ENCODE measurements at regions of chr5 and their contacts with region 1.

Region 1: GRCh38 chr5:32232441-32233219 is 58.5 kb upstream of the GOLPH3 start:
- DNase-seq: peak; percentile 41
- ATAC-seq: peak; percentile 94
- H3K4me3 ChIP-seq: no peak overlapping the region
- H3K27ac ChIP-seq: no peak overlapping the region
- H3K4me1 ChIP-seq: peaks cover 0 to 10% of the 10 kb centered on the region in 2 experiments; a peak in 2 of 4 replicates
- H3K27me3 ChIP-seq: no peaks in the 10 kb centered on the region
- CTCF ChIP-seq: peak; percentile 65 to 90 (median 79); a peak in 5 of 6 replicates
- POLR2A ChIP-seq: no peak
- RAD21 ChIP-seq: peak; percentile 82

Region 2: DNA sequence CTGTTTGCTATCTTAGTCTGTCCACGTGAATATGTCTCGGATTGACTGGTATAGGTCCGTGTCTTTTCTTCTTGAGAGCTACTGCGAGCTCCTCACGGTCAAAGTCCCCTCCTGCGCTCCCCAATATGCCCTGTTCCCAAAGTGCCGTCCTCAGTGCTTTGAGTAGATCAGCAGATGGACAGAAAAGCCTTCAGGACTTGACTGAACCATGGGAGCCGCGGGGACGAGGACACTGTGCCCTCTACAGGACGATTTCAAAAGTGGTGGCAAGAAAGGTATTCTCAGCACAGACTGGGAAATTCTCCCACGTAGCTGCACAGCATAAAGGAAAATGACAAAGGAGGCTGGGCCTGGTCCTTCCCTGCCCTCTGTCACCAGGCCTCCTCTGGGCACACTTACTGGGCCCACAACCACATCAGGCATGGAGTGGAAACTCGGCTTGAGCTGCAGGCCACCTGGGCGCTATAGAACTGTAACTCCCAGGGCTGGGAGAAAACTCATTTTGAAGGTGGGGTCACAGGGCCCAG is 96.7 kb after region 1 on chr5:
- CTCF ChIA-PET with region 1: interaction called, 40 read pairs
- POLR2A ChIA-PET with region 1: no interaction called
- RAD21 ChIA-PET with region 1: interaction called, 5 to 8 read pairs
- intact Hi-C with region 1: loop called (anchors 1 kb)
- DNase-seq: peak; percentile 54
- ATAC-seq: peak; percentile 90
- H3K4me3 ChIP-seq: no peak overlapping the region
- H3K27ac ChIP-seq: no peak overlapping the region
- H3K4me1 ChIP-seq: peaks cover 11 to 25% of the 10 kb centered on the region in 2 experiments
- H3K27me3 ChIP-seq: no peaks in the 10 kb centered on the region
- CTCF ChIP-seq: peak; percentile 67 to 79 (median 77)
- POLR2A ChIP-seq: no peak
- RAD21 ChIP-seq: peak; percentile 86

Region 3: DNA sequence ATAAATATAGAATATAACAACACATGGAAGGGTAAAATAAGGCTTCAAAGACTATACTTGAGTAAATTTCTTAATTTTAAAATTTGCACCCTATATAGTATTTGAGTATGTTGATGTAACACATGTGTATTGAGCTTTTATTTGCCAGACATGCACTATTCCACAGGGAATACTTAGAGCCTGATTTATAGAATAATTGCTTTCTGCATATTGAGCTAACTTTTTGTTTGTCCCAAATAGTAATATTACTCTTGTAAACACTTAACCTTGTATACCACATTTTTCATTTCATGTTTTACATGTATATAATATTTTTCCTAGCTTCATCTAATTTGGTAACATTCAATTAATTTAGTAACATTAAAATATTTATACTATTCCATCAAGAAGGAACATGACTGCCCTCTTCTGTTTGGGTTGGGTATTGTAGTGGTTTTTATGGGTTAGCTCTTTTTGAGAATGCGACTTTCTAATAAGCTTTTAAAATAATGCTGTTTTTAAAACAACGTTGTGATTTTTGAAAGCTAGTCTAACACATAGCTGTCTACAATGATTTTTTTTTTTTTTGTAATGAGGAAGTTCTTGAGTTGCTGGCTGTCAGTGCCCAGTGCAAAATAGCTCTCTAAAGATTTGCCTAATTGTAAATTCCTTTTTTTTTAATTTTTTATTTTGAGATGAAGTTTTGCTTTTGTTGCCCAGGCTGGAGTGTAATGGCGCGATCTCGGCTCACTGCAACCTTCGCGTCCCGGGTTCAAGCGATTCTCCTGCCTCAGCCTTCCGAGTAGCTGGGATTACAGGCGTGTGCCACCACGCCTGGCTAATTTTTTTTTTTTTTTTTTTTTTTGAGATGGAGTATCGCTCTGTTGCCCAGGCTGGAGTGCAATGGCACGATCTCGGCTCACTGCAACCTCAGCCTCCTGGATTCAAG is 357.6 kb after region 1 on chr5:
- CTCF ChIA-PET with region 1: interaction called, 39 read pairs
- POLR2A ChIA-PET with region 1: no interaction called
- RAD21 ChIA-PET with region 1: interaction called, 4 to 6 read pairs
- intact Hi-C with region 1: loop called (anchors 5 kb)
- DNase-seq: peak; percentile 31
- ATAC-seq: no peak
- H3K4me3 ChIP-seq: no peak overlapping the region
- H3K27ac ChIP-seq: no peak overlapping the region
- H3K4me1 ChIP-seq: peaks cover 3 to 8% of the 10 kb centered on the region in 2 experiments; a peak in 1 of 4 replicates
- H3K27me3 ChIP-seq: no peaks in the 10 kb centered on the region
- CTCF ChIP-seq: peak; percentile 45 to 65 (median 61); a peak in 5 of 6 replicates
- POLR2A ChIP-seq: no peak
- RAD21 ChIP-seq: peak; percentile 67

Region 4: DNA sequence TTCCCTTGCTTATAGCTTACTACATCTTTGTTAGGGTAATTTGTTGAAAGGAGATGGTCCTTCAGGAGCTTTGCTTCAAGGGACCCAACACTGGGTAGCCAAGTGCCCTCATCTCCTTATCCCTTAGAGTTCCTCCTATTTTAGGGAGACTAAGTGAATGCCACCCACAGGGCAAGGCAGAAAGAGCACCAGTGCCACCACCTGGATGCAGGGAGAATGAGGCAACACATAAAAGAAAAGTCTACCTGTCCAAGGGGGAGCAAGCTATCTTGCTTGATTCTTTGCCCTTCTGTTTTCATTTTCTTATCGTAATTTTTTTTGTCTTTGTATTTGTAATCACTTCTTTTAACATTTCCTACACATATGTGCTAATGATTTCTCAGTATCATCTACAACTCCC is 684.0 kb after region 1 on chr5:
- CTCF ChIA-PET with region 1: no interaction called
- POLR2A ChIA-PET with region 1: no interaction called
- RAD21 ChIA-PET with region 1: no interaction called
- intact Hi-C with region 1: loop called (anchors 5 kb)
- DNase-seq: peak; percentile 32
- ATAC-seq: peak; percentile 96
- H3K4me3 ChIP-seq: no peak overlapping the region
- H3K27ac ChIP-seq: no peak overlapping the region
- H3K4me1 ChIP-seq: no peaks in the 10 kb centered on the region
- H3K27me3 ChIP-seq: 0 out of 2 replicates have a peak, but pooled peaks cover 5% of the 10 kb centered on the region
- CTCF ChIP-seq: peak; percentile 61 to 72 (median 67); a peak in 5 of 6 replicates
- POLR2A ChIP-seq: no peak
- RAD21 ChIP-seq: peak; percentile 79

Region 5: GRCh38 chr5:33180900-33181299 is 948.3 kb after region 1 on chr5:
- CTCF ChIA-PET with region 1: no interaction called
- POLR2A ChIA-PET with region 1: no interaction called
- RAD21 ChIA-PET with region 1: no interaction called
- intact Hi-C with region 1: loop called (anchors 2 kb)
- DNase-seq: peak; percentile 28
- ATAC-seq: no peak
- H3K4me3 ChIP-seq: no peak overlapping the region
- H3K27ac ChIP-seq: no peak overlapping the region
- H3K4me1 ChIP-seq: no peaks in the 10 kb centered on the region
- H3K27me3 ChIP-seq: no peaks in the 10 kb centered on the region
- CTCF ChIP-seq: peak; percentile 36 to 63 (median 59); a peak in 5 of 6 replicates
- POLR2A ChIP-seq: no peak
- RAD21 ChIP-seq: peak; percentile 76

Measured in HCT116 (cell line).